HepG2 (cell line): ENCODE measurements at regions of chr20 and their contacts with region 1.

Region 1: GRCh38 chr20:22511943-22512910 is 72.1 kb downstream of the FOXA2 start:
- DNase-seq: peak; percentile 99
- ATAC-seq: peak; percentile 93
- H3K4me3 ChIP-seq: peak overlapping the region; percentile 0 to 47 (median 27); a peak in 4 of 6 replicates
- H3K27ac ChIP-seq: peak overlapping the region; percentile 92
- H3K4me1 ChIP-seq: peaks cover 94% of the 10 kb centered on the region
- H3K27me3 ChIP-seq: no peaks in the 10 kb centered on the region
- CTCF ChIP-seq: peak; percentile 46
- EP300 ChIP-seq: peak; percentile 68 to 99; a peak in 3 of 4 replicates
- POLR2A ChIP-seq: peak; percentile 83 to 93
- RAD21 ChIP-seq: peak; percentile 63

Region 2: DNA sequence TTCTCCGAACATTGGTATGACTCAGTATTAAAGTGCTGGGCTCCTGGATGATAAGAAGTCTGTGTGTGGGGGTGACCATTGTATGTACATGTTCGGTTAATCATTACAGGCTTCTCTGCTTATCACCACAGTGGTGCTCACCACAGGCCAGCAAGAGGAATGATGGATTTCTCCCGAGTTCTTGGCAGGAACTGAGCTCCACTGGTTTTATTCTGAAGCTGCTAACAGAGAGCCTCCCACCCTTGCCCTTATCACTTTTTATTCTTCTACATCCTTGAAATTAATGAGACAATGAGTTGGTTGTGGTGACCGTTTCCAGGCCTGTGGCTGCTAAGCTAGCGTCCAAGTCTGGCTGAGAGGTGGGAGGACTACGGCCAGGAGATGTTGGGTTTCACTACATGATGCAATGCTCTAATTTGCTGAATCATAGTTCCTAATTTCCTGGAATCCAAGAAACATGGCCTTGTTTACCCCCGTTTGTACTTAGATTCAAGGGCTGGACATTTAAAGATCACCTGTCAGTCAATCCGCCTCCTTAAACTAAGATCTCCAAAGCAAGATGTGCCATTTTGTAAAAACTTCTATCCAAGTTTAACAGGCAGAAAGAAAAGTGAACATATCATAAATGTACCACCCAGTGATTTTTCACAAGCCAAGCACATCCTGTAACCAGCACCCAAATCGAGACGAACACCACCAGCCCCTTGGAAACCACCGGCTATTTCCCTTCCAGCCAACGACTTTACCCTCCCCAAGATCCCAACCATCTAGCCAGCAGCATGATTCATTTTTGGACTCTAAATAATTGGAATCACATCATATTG is 100.4 kb before region 1 on chr20:
- CTCF ChIA-PET with region 1: no interaction called
- POLR2A ChIA-PET with region 1: interaction called, 12 read pairs
- in situ Hi-C with region 1: no loop called
- intact Hi-C with region 1: no loop called
- DNase-seq: peak; percentile 96
- ATAC-seq: peak; percentile 100
- H3K4me3 ChIP-seq: peak overlapping the region; percentile 17 to 56 (median 20); a peak in 4 of 6 replicates
- H3K27ac ChIP-seq: peak overlapping the region; percentile 77
- H3K4me1 ChIP-seq: peaks cover 57% of the 10 kb centered on the region
- H3K27me3 ChIP-seq: no peaks in the 10 kb centered on the region; a peak in 1 of 5 replicates
- CTCF ChIP-seq: 0 out of 2 replicates have a peak, but pooled peaks have one; percentile 4
- EP300 ChIP-seq: peak; percentile 51 to 89; a peak in 3 of 4 replicates
- POLR2A ChIP-seq: peak; percentile 69 to 73
- RAD21 ChIP-seq: no peak

Region 3: DNA sequence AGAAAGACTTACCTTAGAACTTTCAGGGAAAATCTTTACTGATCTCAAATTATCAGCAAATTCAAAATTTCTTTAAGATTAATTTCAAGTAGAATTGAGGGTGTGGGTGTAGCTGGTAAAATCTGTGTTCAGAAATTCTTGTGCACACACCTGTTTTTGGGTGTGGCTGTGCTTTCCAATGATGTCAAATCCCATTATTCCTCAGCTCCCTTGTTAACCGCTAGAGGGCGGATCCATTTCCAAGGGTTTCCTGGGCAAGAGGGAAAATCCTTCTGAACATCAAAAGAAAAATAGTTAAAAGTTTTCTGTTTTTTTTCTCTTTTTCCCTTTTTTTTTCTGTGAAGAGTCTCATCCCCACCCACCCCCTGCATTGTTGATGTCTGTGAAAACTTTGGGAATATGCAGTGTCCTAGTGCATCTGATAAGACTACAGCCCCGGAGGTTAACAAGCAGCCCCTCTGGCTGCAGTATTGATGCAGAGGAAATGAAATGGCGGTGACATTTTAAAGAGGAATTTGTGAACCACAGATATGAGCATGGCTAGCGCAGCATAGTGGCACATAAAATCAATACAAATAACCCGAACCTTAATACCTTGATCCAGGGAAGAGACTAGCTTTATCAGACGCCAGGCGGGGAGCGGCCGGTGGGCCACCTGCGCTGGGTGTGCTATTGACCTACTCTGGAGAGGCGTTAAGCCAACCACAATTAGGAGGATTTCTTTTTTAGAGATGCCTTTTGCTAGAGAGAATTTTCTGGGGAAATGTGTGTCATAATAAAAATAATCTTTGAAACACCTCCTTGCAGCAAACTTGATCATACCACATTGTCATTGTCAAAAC is 58.8 kb before region 1 on chr20:
- CTCF ChIA-PET with region 1: no interaction called
- POLR2A ChIA-PET with region 1: interaction called, 12 read pairs
- in situ Hi-C with region 1: no loop called
- intact Hi-C with region 1: loop called (anchors 2 kb)
- DNase-seq: peak; percentile 70
- ATAC-seq: peak; percentile 60; the same call in 2 of the 3 replicates
- H3K4me3 ChIP-seq: no peak overlapping the region
- H3K27ac ChIP-seq: no peak overlapping the region
- H3K4me1 ChIP-seq: peaks cover 27% of the 10 kb centered on the region
- H3K27me3 ChIP-seq: peaks cover 6 to 60% of the 10 kb centered on the region in 2 experiments
- CTCF ChIP-seq: peak; percentile 86
- EP300 ChIP-seq: no peak
- POLR2A ChIP-seq: no peak
- RAD21 ChIP-seq: peak; percentile 80

Region 4: DNA sequence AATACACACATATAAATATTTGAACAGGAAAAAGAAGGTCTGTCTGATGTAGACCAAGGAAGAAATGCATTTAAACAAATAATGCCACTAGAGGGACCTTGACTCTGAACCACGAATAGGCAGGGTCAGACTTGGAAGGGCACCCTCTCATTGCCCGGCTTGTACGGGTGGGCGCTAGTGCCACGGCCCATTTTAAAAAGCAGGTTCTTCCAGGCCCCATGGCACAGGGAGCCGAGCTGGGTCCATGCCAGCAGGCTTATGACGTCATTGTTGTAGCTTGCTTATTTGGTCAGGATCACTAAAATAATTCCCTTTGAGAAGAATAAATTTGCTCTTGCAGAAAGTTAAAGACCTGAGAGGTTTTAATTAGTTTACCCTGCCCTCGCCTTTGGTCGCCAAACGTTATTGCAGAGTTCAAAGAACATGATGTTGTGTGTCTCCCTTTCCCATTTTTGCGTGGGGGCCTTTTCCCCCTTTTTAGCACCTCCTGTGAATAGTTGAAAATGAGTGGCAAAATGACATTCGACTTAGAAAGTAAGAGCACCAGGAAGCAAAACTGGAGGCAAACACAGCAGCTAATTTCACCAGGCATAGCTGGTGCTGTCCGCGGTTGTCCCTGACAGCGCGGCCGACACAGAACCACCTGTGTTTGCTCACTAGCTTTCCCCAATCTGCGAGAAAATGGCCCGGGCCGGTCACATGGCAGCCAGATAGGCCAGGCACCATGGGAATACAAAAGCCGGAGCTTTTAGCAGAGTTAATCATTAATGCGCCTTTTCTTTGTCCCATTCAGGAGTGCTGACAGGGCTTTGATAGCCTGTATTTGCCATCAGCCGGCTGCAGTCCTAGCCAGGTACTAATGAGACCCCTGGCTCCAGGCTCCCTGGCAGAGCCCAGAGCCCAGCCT is 21.7 kb before region 1 on chr20:
- CTCF ChIA-PET with region 1: no interaction called
- POLR2A ChIA-PET with region 1: interaction called, 147 read pairs
- in situ Hi-C with region 1: no loop called
- intact Hi-C with region 1: loop called (anchors 1 kb)
- DNase-seq: peak; percentile 100
- ATAC-seq: peak; percentile 99
- H3K4me3 ChIP-seq: peak overlapping the region; percentile 41 to 61 (median 59)
- H3K27ac ChIP-seq: peak overlapping the region; percentile 84
- H3K4me1 ChIP-seq: peaks cover 47% of the 10 kb centered on the region
- H3K27me3 ChIP-seq: no peaks in the 10 kb centered on the region
- CTCF ChIP-seq: peak; percentile 81
- EP300 ChIP-seq: peak; percentile 81 to 92
- POLR2A ChIP-seq: peak; percentile 58 to 75
- RAD21 ChIP-seq: peak; percentile 79

Region 5: DNA sequence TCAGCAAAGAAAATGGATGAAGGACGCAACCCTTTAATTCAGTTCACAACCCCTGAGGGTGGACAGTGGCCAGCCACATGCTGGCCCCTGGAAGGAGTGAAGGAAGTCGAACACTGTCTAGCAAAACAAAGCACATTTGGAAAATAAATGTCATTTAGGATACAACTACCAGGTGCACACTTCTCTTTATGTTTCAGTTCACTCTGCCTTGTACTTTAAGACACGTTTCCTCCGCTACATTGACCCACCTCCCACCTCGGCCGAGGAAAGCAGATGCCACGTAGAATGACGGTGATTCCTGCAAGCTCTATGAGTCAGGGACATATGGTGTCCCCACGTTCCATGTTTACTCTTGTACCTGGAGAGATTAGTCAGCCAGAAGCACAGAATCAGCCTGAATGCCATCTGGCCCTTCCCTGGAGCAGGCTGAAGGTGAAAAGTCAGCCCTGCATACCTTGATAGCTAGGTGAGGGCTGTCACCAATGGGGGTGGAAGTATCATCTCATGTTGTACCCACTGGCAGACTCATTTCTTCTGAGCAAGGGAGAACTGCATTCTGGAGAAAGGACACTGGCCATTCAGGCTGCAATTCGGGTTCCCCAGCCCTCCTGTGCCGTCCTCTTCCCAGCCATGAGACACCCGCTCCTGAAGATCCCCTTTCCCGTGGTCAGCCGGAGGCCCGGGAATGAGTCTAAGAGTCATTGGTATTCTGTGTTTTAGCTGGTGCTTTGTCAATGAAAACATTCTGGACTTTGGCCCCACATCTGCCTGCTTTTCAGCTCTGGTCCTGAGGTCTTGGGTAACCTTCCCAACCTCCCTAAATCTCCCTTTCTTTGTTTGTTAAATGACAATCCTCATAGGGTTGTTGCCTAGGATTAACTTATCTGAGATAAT is 11.5 kb after region 1 on chr20:
- CTCF ChIA-PET with region 1: no interaction called
- POLR2A ChIA-PET with region 1: interaction called, 501 read pairs
- in situ Hi-C with region 1: no loop called
- intact Hi-C with region 1: loop called (anchors 1 kb)
- DNase-seq: peak; percentile 99
- ATAC-seq: peak; percentile 81
- H3K4me3 ChIP-seq: peak overlapping the region; percentile 39 to 69 (median 50); a peak in 5 of 6 replicates
- H3K27ac ChIP-seq: peak overlapping the region; percentile 89
- H3K4me1 ChIP-seq: peaks cover 67% of the 10 kb centered on the region
- H3K27me3 ChIP-seq: no peaks in the 10 kb centered on the region
- CTCF ChIP-seq: no peak
- EP300 ChIP-seq: peak; percentile 46 to 90
- POLR2A ChIP-seq: peak; percentile 74 to 85
- RAD21 ChIP-seq: peak; percentile 72

Region 6: GRCh38 chr20:22567944-22568871 is 56.0 kb after region 1 on chr20:
- CTCF ChIA-PET with region 1: no interaction called
- POLR2A ChIA-PET with region 1: interaction called, 51 read pairs
- in situ Hi-C with region 1: no loop called
- intact Hi-C with region 1: no loop called
- DNase-seq: no peak
- ATAC-seq: no peak
- H3K4me3 ChIP-seq: no peak overlapping the region
- H3K27ac ChIP-seq: no peak overlapping the region
- H3K4me1 ChIP-seq: peaks cover 58% of the 10 kb centered on the region
- H3K27me3 ChIP-seq: no peaks in the 10 kb centered on the region; a peak in 1 of 5 replicates
- CTCF ChIP-seq: no peak
- EP300 ChIP-seq: no peak
- POLR2A ChIP-seq: no peak
- RAD21 ChIP-seq: no peak

Region 7: DNA sequence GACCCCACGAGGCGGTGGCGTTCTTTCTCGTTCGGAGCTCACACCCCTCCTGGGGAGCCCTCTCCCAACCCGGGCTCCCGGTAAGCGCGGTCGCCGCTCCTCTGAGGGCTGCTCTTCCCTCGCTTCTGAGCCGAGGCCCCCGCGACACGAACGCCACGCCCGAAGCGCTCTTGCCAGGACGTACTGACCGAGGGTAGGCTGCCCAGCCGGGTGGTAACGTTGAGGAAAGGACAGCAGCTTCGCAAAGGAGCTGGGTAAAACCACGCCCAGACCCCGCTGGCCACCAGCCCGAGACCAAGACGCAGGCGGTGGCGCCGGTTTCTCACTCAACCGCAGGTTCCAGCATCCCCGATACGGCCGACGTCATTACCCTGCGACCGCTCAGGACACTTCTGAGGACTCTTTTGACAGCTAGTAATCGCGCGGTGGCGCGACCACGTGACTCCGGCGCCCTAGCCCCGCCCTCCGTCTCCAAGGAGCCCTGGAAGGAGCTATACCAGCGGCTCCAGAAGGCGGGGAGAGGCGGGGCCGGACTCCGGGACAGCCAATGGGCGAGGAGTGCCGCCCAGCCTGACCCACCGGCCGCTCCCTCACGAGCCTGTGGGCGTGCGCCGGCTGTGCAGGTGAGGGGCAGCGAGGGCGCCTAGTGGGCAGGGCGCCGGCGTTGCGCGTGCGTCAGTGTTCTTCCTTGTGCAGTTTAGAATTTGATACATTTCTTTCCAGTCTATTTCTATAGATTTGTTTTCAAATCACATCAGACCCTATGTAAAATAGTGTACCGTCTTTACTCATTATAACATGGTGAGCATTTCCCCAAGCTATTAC is 845.8 kb after region 1 on chr20:
- CTCF ChIA-PET with region 1: no interaction called
- POLR2A ChIA-PET with region 1: interaction called, 6 read pairs
- in situ Hi-C with region 1: no loop called
- intact Hi-C with region 1: loop called (anchors 5 kb)
- DNase-seq: peak; percentile 98
- ATAC-seq: peak; percentile 76
- H3K4me3 ChIP-seq: peak overlapping the region; percentile 55 to 91 (median 65)
- H3K27ac ChIP-seq: peak overlapping the region; percentile 77
- H3K4me1 ChIP-seq: peaks cover 45% of the 10 kb centered on the region
- H3K27me3 ChIP-seq: no peaks in the 10 kb centered on the region; a peak in 1 of 5 replicates
- CTCF ChIP-seq: peak; percentile 52
- EP300 ChIP-seq: 0 out of 4 replicates have a peak, but pooled peaks of 1 of the 2 experiments have one; percentile 9
- POLR2A ChIP-seq: peak; percentile 73 to 85
- RAD21 ChIP-seq: no peak; the same call in 1 of the 2 replicates